Heart left ventricle (tissue), 16 donors: ENCODE measurements at regions of chr2 and their contacts with region 1.

Region 1: GRCh38 chr2:151828143-151828889 is at the start of gene ARL5A:
- DNase-seq: peak; percentile 96 to 98 (median 96)
- ATAC-seq: peak; percentile 98 to 99 (median 98)
- H3K4me3 ChIP-seq: peak within 1 kb of the TSS; percentile 74 to 96 (median 88)
- H3K27ac ChIP-seq: peak within 1 kb of the TSS; percentile 75 to 95 (median 92)
- H3K4me1 ChIP-seq: peaks cover 0 to 53% (median 41%) of the 10 kb centered on the region in 12 donors
- H3K27me3 ChIP-seq: no peaks in the 10 kb centered on the region
- CTCF ChIP-seq: no peak
- POLR2A ChIP-seq: peak in 1 of 2 donors; percentile 92
- total RNA-seq, gene ARL5A: 38.2 to 59.1 (median 54.5) TPM

Region 2: GRCh38 chr2:151927501-151928221 is 99.3 kb after region 1 on chr2:
- intact Hi-C with region 1: loop called in 1 of 10 experiments (anchors 5 kb)
- DNase-seq: no peak
- ATAC-seq: no peak
- H3K4me3 ChIP-seq: no peak overlapping the region
- H3K27ac ChIP-seq: no peak overlapping the region
- H3K4me1 ChIP-seq: peaks cover 0 to 28% (median 17%) of the 10 kb centered on the region in 12 donors
- H3K27me3 ChIP-seq: no peaks in the 10 kb centered on the region
- CTCF ChIP-seq: no peak
- POLR2A ChIP-seq: no peak

Region 3: GRCh38 chr2:151999053-151999452 is 170.7 kb after region 1 on chr2:
- intact Hi-C with region 1: loop called in 2 of 10 experiments (anchors 5 to 10 kb)
- DNase-seq: peak in 4 of 5 donors; percentile 29 to 56 (median 42)
- ATAC-seq: peak in 3 of 4 donors; percentile 59 to 73 (median 70)
- H3K4me3 ChIP-seq: no peak overlapping the region
- H3K27ac ChIP-seq: no peak overlapping the region
- H3K4me1 ChIP-seq: no peaks in the 10 kb centered on the region
- H3K27me3 ChIP-seq: no peaks in the 10 kb centered on the region
- CTCF ChIP-seq: peak; percentile 60 to 79 (median 72)
- POLR2A ChIP-seq: no peak

Region 4: DNA sequence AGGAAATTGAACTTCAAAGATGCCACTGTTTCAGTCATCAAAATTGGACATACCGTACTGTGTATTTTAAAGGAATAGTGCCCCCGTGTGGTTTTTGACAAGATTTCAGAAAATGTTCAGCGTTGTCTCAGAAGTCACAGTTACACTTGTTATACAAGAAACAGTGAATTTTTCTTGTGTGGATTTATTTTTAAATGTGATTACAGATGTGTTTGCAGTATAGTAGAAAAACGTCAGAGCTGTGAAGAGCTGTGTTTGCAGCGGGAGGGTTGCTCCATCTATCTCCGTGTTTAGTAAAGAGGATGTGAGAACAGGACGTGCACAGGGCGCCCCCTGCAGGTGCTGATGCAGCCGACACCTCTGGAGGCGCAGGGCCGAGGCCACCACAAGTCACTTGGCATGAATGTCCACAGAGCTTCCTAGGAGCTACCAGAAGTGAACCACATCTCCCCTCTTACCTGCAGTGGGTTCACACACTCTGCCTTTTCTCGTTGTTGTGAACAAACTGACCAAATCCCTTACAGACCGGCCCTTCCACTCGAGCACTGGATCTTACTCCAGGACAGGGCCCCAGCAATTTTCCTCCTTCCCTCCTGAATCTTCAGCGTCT is 197.5 kb after region 1 on chr2:
- intact Hi-C with region 1: loop called in 1 of 10 experiments (anchors 10 kb)
- DNase-seq: peak; percentile 77 to 91 (median 81)
- ATAC-seq: peak; percentile 87 to 98 (median 96)
- H3K4me3 ChIP-seq: peak overlapping the region in 11 of 12 donors; percentile 9 to 57 (median 40)
- H3K27ac ChIP-seq: no peak overlapping the region
- H3K4me1 ChIP-seq: peaks cover 0 to 4% (median 0%) of the 10 kb centered on the region in 12 donors
- H3K27me3 ChIP-seq: no peaks in the 10 kb centered on the region
- CTCF ChIP-seq: peak; percentile 88 to 99 (median 95)
- POLR2A ChIP-seq: no peak